ENCODE measurements at regions of chr1 and their contacts with region 1.

Region 1: GRCh38 chr1:85330711-85331290 is 54.4 kb upstream of the BCL10 start:
- DNase-seq: no peak
- ATAC-seq: no peak
- H3K4me3 Mint-ChIP-seq: no peak overlapping the region
- H3K27ac Mint-ChIP-seq: no peak overlapping the region; the same call in 1 of the 2 replicates
- H3K4me1 Mint-ChIP-seq: peaks cover 39% of the 10 kb centered on the region
- H3K27me3 Mint-ChIP-seq: no peaks in the 10 kb centered on the region
- CTCF ChIP-seq: no peak

Region 2: GRCh38 chr1:85344256-85344694 is 13.5 kb after region 1 on chr1:
- CTCF ChIA-PET with region 1: interaction called, 12 read pairs
- POLR2A ChIA-PET with region 1: no interaction called
- DNase-seq: peak; percentile 71
- ATAC-seq: peak; percentile 99
- H3K4me3 Mint-ChIP-seq: no peak overlapping the region
- H3K27ac Mint-ChIP-seq: peak overlapping the region; percentile 92
- H3K4me1 Mint-ChIP-seq: peaks cover 58% of the 10 kb centered on the region
- H3K27me3 Mint-ChIP-seq: no peaks in the 10 kb centered on the region
- CTCF ChIP-seq: 0 out of 2 replicates have a peak, but pooled peaks have one; percentile 27

Measured in WTC11 (cell line).